Dendritic cell treated with granulocyte-macrophage colony-stimulating factor and Interleukin-4, amounts not matched to agents 40 ng/mL and 50 ng/mL, for 4 days (primary cell): ENCODE measurements at regions of chr13 and their contacts with region 1.

Region 1: DNA sequence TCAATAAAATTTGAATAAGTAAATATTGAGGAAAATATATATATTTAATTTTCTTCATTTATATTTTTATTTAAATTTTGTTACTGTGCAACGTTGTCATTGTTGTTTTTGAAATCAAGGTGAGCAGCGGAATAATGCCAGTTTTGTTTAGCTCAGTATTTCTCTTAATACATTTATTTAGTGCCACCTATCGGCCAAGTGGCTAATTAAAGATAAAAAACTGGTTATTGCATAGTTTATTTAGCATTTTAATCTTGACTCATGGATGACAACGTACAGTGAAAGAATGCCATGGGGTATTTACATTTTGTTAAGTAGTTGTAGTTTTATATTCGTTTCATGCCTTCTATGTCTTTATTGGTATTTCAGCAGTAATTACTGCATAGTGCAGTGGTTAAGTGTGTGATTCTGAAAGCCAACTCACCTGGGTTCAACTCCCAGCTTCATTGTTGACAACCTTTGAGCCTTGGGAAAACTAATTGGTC is 265.9 kb downstream of the MYO16 start:
- H3K4me3 Mint-ChIP-seq: no peak overlapping the region
- H3K27ac Mint-ChIP-seq: no peak overlapping the region
- H3K4me1 Mint-ChIP-seq: peaks cover 12% of the 10 kb centered on the region
- H3K27me3 Mint-ChIP-seq: no peaks in the 10 kb centered on the region

Region 2: GRCh38 chr13:107211073-107211472 is 1684.2 kb before region 1 on chr13:
- intact Hi-C with region 1: loop called (anchors 5 kb)
- H3K4me3 Mint-ChIP-seq: no peak overlapping the region
- H3K27ac Mint-ChIP-seq: no peak overlapping the region
- H3K4me1 Mint-ChIP-seq: no peaks in the 10 kb centered on the region
- H3K27me3 Mint-ChIP-seq: no peaks in the 10 kb centered on the region

Region 3: DNA sequence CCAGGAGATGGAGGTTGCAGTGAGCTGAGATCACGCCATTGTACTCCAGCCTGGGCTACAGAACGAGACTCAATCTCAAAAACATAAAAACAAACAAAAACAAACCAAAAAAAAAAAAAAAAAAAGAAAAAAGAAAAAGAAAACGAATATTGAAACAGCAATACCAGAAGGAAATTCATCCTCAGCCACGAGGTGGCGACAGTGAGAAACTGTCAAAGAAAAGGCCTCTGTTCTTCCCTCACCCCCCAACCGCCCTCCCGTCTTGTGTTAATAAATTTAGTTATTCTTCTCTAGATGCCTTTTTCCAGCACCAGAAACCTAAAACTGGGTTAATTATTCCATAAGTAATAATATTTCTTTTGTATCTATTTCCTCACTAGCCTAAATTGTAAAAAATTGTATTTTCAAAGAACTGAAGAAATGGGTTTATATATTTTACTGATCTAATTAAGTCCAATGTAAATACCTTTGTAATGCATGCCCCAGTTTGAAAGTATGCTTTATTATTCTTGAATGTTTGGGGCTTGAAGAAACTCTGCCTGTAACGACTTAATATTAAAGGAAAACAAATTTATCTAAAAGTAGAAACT is 718.5 kb before region 1 on chr13:
- intact Hi-C with region 1: loop called (anchors 2 kb)
- H3K4me3 Mint-ChIP-seq: no peak overlapping the region
- H3K27ac Mint-ChIP-seq: no peak overlapping the region
- H3K4me1 Mint-ChIP-seq: no peaks in the 10 kb centered on the region
- H3K27me3 Mint-ChIP-seq: no peaks in the 10 kb centered on the region

Region 4: GRCh38 chr13:108227651-108228272 is 667.5 kb before region 1 on chr13:
- intact Hi-C with region 1: loop called (anchors 5 kb)
- H3K4me3 Mint-ChIP-seq: no peak overlapping the region
- H3K27ac Mint-ChIP-seq: no peak overlapping the region
- H3K4me1 Mint-ChIP-seq: peaks cover 10% of the 10 kb centered on the region
- H3K27me3 Mint-ChIP-seq: no peaks in the 10 kb centered on the region

Region 5: GRCh38 chr13:108322206-108322824 is 572.9 kb before region 1 on chr13:
- intact Hi-C with region 1: loop called (anchors 2 kb)
- H3K4me3 Mint-ChIP-seq: no peak overlapping the region
- H3K27ac Mint-ChIP-seq: no peak overlapping the region
- H3K4me1 Mint-ChIP-seq: peaks cover 32% of the 10 kb centered on the region
- H3K27me3 Mint-ChIP-seq: no peaks in the 10 kb centered on the region